Adrenal gland (tissue), 19 donors: ENCODE measurements at regions of chr7 and their contacts with region 1.

Region 1: GRCh38 chr7:29748286-29749108 is 57.8 kb upstream of the WIPF3 start:
- DNase-seq: peak in 2 of 7 donors; percentile 9 to 26
- H3K4me3 ChIP-seq: no peak overlapping the region
- H3K27ac ChIP-seq: peak overlapping the region in 1 of 5 donors; percentile 49
- H3K4me1 ChIP-seq: peaks cover 0 to 7% of the 10 kb centered on the region in 2 donors
- H3K27me3 ChIP-seq: no peaks in the 10 kb centered on the region
- CTCF ChIP-seq: peak in 5 of 6 experiments; percentile 43 to 64 (median 57)
- POLR2A ChIP-seq: no peak

Region 2: GRCh38 chr7:29921404-29922010 is 173.0 kb after region 1 on chr7:
- intact Hi-C with region 1: loop called (anchors 5 kb)
- DNase-seq: peak; percentile 25 to 73 (median 42)
- H3K4me3 ChIP-seq: no peak overlapping the region
- H3K27ac ChIP-seq: no peak overlapping the region
- H3K4me1 ChIP-seq: no peaks in the 10 kb centered on the region
- H3K27me3 ChIP-seq: no peaks in the 10 kb centered on the region
- CTCF ChIP-seq: peak; percentile 78 to 93 (median 90)
- POLR2A ChIP-seq: no peak